Left colon (tissue), 2 donors: ENCODE measurements at regions of chr2 and their contacts with region 1.

Region 1: DNA sequence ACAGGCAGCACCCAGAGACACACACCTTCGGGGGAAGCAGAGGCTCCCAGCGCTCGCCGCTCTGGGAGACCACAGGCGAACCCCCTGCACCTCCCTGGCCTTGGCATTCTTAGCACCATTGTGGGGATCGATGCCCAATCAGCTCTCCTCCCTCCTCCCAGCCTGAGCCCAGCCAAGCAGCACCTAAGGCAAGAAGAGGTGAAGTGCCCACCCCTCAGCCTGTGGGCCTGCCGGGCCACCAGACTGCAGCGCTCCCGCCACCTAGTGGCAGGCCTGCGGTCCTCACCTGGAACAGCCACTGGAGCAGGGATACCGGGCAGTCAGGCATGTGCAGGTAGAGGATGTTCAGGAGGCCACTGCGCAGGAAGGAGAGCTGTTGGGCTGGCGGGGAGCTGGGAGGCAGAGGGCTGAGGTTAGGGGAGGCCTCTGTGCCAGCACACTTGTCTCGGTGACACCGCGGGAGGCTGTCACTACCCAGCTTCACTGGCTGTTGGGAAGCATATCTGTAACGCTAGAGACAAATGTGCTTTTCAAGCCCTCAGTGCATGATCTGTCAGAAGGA is 35.2 kb downstream of the FAM178B start:
- DNase-seq: peak; percentile 65 to 79
- ATAC-seq: peak; percentile 86

Region 2: GRCh38 chr2:96856776-96857673 is 94.1 kb before region 1 on chr2:
- intact Hi-C with region 1: loop called in 1 of 2 experiments (anchors 5 kb)
- DNase-seq: peak in 1 of 2 donors; percentile 53
- ATAC-seq: peak; percentile 32

Region 3: GRCh38 chr2:96868555-96869280 is 82.5 kb before region 1 on chr2:
- intact Hi-C with region 1: loop called in 1 of 2 experiments (anchors 5 kb)
- DNase-seq: peak; percentile 82 to 91
- ATAC-seq: peak; percentile 61